BJ (cell line): ENCODE measurements at regions of chr5 and their contacts with region 1.

Region 1: GRCh38 chr5:96054311-96055030 is 92.8 kb upstream of the ELL2 start:
- DNase-seq: no peak
- H3K4me3 ChIP-seq: no peak overlapping the region
- H3K27me3 ChIP-seq: no peaks in the 10 kb centered on the region
- CTCF ChIP-seq: no peak

Region 2: GRCh38 chr5:96065577-96066385 is 11.3 kb after region 1 on chr5:
- CTCF ChIA-PET with region 1: interaction called, 7 read pairs
- POLR2A ChIA-PET with region 1: interaction called, 10 read pairs
- DNase-seq: no peak
- H3K4me3 ChIP-seq: no peak overlapping the region
- H3K27me3 ChIP-seq: no peaks in the 10 kb centered on the region
- CTCF ChIP-seq: no peak

Region 3: GRCh38 chr5:96076451-96076850 is 22.0 kb after region 1 on chr5:
- CTCF ChIA-PET with region 1: no interaction called
- POLR2A ChIA-PET with region 1: no interaction called
- DNase-seq: no peak
- H3K4me3 ChIP-seq: no peak overlapping the region
- H3K27me3 ChIP-seq: no peaks in the 10 kb centered on the region
- CTCF ChIP-seq: no peak